Testis (tissue), 5 donors: ENCODE measurements at regions of chr7 and their contacts with region 1.

Region 1: DNA sequence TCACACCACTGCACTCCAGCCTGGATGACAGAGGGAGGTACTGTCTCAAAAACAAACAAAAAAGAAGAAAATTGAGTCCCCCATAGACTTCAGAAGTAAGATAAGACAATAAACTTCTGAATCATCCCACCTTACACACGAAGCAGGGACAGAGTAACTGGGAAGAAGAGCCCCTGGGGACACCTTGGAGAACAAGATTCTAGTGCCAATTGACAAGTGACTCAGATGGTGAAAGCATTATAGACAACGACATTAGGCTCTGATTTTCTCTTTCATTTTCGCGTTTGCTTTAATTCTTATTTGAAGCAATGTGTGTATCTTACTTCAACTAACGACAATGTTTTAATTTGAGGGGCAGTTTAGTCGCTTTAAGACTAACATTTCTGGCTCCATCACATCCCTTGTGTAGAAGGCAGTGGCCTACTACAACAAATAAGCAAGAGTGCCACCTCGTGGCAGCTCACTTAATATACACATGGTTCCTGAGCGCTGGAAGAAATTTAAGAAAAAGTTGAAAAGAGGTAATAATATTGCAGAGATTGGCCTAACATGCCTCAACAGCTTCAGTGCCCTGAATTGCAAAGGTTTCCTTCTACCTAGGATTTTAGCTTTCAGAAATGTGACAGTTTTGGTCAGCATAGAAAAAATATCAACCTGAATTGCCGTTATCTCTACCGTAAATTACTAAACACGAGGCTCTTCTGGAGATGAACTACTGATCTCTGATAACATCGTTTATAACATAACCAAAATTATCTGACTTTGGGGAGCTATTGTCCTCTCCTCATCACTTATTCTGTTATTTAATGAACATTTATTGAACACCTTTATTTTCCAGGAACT is 36.7 kb downstream of the ASNS start:
- DNase-seq: peak; percentile 89
- H3K4me3 ChIP-seq: no peak overlapping the region
- H3K27ac ChIP-seq: no peak overlapping the region
- H3K4me1 ChIP-seq: no peaks in the 10 kb centered on the region
- H3K27me3 ChIP-seq: no peaks in the 10 kb centered on the region
- CTCF ChIP-seq: peak in 2 of 3 experiments; percentile 46 to 64
- POLR2A ChIP-seq: no peak

Region 2: DNA sequence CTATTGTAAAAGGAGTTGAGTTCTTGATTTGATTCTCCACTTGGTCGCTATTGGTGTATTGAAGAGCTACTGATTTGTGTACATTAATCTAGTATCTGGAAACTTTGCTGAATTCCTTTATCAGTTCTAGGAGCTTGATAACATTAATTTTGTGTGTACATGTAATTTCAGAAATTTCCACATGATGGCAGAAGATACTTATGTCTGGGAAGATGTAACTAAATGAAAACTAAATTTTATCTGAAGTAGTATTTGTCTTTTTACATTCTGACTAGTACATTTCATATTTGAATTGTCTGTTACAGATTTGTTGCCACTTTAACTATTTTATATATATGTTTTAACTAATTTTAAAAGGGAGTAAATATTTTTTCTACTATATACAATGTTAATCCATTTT is 690.4 kb before region 1 on chr7:
- intact Hi-C with region 1: loop called (anchors 10 kb)
- DNase-seq: no peak
- H3K4me3 ChIP-seq: no peak overlapping the region
- H3K27ac ChIP-seq: no peak overlapping the region
- H3K4me1 ChIP-seq: no peaks in the 10 kb centered on the region
- H3K27me3 ChIP-seq: no peaks in the 10 kb centered on the region
- CTCF ChIP-seq: peak in 2 of 3 experiments; percentile 19 to 45
- POLR2A ChIP-seq: no peak

Region 3: GRCh38 chr7:98996150-98996552 is 1160.6 kb after region 1 on chr7:
- intact Hi-C with region 1: no loop called
- DNase-seq: peak; percentile 10
- H3K4me3 ChIP-seq: no peak overlapping the region
- H3K27ac ChIP-seq: no peak overlapping the region
- H3K4me1 ChIP-seq: no peaks in the 10 kb centered on the region
- H3K27me3 ChIP-seq: no peaks in the 10 kb centered on the region
- CTCF ChIP-seq: no peak
- POLR2A ChIP-seq: no peak